ENCODE measurements at regions of chr6 and their contacts with region 1.

Region 1: DNA sequence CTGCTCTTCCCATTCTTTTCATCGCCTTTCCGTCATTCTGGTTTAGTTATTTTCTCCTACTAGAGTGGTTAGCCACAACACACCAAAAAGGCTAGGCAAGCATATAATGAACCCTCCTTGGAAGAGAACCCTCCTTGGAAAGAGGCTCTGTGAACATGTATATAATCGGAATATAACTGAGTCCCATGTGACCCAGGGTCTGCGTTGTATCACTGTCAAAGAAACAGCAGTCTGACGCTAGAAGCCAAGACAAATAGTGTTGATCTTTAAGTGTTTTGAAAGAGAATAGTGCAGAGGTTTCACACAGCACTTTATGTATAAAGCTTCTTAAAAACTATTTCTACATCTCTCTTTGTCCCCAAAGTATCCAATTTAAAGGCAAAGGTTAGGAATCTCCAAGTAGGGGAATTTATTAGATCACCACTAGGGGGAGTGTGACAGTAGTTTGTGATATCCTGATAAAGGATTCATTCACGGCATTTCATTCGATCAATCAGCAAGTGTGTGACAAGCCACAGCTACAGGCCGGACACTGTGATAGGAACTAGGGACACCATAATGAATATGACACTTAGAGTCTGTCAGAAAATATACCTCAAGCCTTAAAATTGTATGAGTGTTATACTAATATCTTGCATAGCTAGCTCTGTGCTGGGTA is 395.3 kb downstream of the CD109 start:
- ATAC-seq: peak; percentile 51 to 72 (median 58)
- H3K4me3 ChIP-seq: no peak overlapping the region
- H3K27ac ChIP-seq: no peak overlapping the region
- H3K4me1 ChIP-seq: no peaks in the 10 kb centered on the region

Region 2: DNA sequence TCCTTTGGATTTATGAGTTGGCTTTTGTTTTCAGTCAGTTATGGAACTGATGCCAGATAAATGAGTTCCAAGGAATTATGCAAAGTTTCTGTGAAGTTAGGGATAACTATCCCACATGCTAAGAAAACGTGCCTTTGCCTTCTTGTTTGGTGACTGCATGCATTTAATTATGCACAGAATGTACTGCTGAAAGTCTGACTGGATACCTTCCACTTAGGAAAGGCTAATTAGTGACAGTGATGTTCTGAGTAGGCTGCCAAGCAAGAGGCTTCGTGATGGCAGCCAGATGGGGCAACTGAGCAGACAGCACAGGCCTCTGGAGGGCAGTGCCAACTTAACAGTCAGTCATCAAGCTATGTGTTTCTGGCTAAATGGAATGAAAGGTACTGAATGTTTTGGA is 105.4 kb before region 1 on chr6:
- in situ Hi-C with region 1: loop called in 1 of 9 experiments (anchors 10 kb)
- ATAC-seq: peak in 3 of 8 experiments; percentile 65 to 93 (median 90)
- H3K4me3 ChIP-seq: no peak overlapping the region
- H3K27ac ChIP-seq: no peak overlapping the region
- H3K4me1 ChIP-seq: no peaks in the 10 kb centered on the region

Region 3: GRCh38 chr6:75147512-75147911 is 1056.2 kb after region 1 on chr6:
- in situ Hi-C with region 1: no loop called
- ATAC-seq: no peak
- H3K4me3 ChIP-seq: no peak overlapping the region
- H3K27ac ChIP-seq: no peak overlapping the region
- H3K4me1 ChIP-seq: peaks cover 4 to 5% of the 10 kb centered on the region in 2 donors